ENCODE measurements at regions of chr2 and their contacts with region 1.

Region 1: GRCh38 chr2:186862869-186863709 is 14.1 kb upstream of the ZSWIM2 start:
- DNase-seq: peak; percentile 32
- ATAC-seq: peak; percentile 78
- H3K4me3 ChIP-seq: no peak overlapping the region
- H3K27ac ChIP-seq: no peak overlapping the region
- H3K4me1 ChIP-seq: no peaks in the 10 kb centered on the region
- H3K27me3 ChIP-seq: no peaks in the 10 kb centered on the region
- CTCF ChIP-seq: peak; percentile 54 to 83 (median 61)
- POLR2A ChIP-seq: no peak
- RAD21 ChIP-seq: peak; percentile 87

Region 2: DNA sequence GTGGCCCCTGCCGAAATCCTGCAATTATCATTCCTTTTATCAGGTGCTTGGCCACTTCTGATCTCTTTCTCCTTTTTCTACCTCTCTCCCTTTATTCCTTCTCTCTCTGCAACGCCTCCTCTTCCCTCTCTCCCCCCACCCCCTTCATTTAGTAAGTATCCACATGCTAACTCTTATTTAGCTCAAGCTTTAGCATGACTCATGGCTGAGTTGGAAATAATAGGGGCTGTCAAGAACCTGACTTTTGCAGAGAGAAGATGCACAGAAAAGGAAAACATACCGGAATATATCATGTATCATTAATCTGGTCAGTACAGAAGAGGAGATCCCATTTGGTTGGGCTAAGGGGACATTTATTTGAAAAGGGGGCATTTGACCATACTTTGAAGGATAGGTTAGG is 136.2 kb before region 1 on chr2:
- CTCF ChIA-PET with region 1: no interaction called
- POLR2A ChIA-PET with region 1: no interaction called
- RAD21 ChIA-PET with region 1: no interaction called
- intact Hi-C with region 1: no loop called
- DNase-seq: no peak
- ATAC-seq: no peak
- H3K4me3 ChIP-seq: no peak overlapping the region
- H3K27ac ChIP-seq: no peak overlapping the region
- H3K4me1 ChIP-seq: no peaks in the 10 kb centered on the region
- H3K27me3 ChIP-seq: no peaks in the 10 kb centered on the region
- CTCF ChIP-seq: no peak
- POLR2A ChIP-seq: no peak
- RAD21 ChIP-seq: no peak

Region 3: GRCh38 chr2:186903216-186903615 is 40.1 kb after region 1 on chr2:
- CTCF ChIA-PET with region 1: interaction called, 13 read pairs
- POLR2A ChIA-PET with region 1: no interaction called
- RAD21 ChIA-PET with region 1: no interaction called
- intact Hi-C with region 1: no loop called
- DNase-seq: no peak
- ATAC-seq: no peak
- H3K4me3 ChIP-seq: no peak overlapping the region
- H3K27ac ChIP-seq: no peak overlapping the region
- H3K4me1 ChIP-seq: no peaks in the 10 kb centered on the region
- H3K27me3 ChIP-seq: no peaks in the 10 kb centered on the region
- CTCF ChIP-seq: peak; percentile 28 to 62 (median 33); a peak in 4 of 6 replicates
- POLR2A ChIP-seq: no peak
- RAD21 ChIP-seq: peak; percentile 60

Region 4: GRCh38 chr2:186946896-186947467 is 83.9 kb after region 1 on chr2:
- CTCF ChIA-PET with region 1: no interaction called
- POLR2A ChIA-PET with region 1: no interaction called
- RAD21 ChIA-PET with region 1: no interaction called
- intact Hi-C with region 1: no loop called
- DNase-seq: no peak
- ATAC-seq: no peak
- H3K4me3 ChIP-seq: no peak overlapping the region
- H3K27ac ChIP-seq: no peak overlapping the region
- H3K4me1 ChIP-seq: peaks cover 0 to 5% of the 10 kb centered on the region in 2 experiments; a peak in 1 of 4 replicates
- H3K27me3 ChIP-seq: no peaks in the 10 kb centered on the region
- CTCF ChIP-seq: no peak
- POLR2A ChIP-seq: no peak
- RAD21 ChIP-seq: no peak

Region 5: GRCh38 chr2:187447336-187447735 is 584.2 kb after region 1 on chr2:
- CTCF ChIA-PET with region 1: interaction called, 50 read pairs
- POLR2A ChIA-PET with region 1: no interaction called
- RAD21 ChIA-PET with region 1: interaction called, 3 to 5 read pairs
- intact Hi-C with region 1: no loop called
- DNase-seq: no peak
- ATAC-seq: no peak
- H3K4me3 ChIP-seq: no peak overlapping the region
- H3K27ac ChIP-seq: no peak overlapping the region
- H3K4me1 ChIP-seq: peaks cover 0 to 9% of the 10 kb centered on the region in 2 experiments; a peak in 2 of 4 replicates
- H3K27me3 ChIP-seq: no peaks in the 10 kb centered on the region
- CTCF ChIP-seq: no peak
- POLR2A ChIP-seq: no peak
- RAD21 ChIP-seq: no peak

Region 6: GRCh38 chr2:188512456-188512855 is 1649.4 kb after region 1 on chr2:
- CTCF ChIA-PET with region 1: no interaction called
- POLR2A ChIA-PET with region 1: no interaction called
- RAD21 ChIA-PET with region 1: no interaction called
- intact Hi-C with region 1: loop called (anchors 10 kb)
- DNase-seq: no peak
- ATAC-seq: peak; percentile 60
- H3K4me3 ChIP-seq: no peak overlapping the region
- H3K27ac ChIP-seq: no peak overlapping the region
- H3K4me1 ChIP-seq: peaks cover 0 to 7% of the 10 kb centered on the region in 2 experiments; a peak in 1 of 4 replicates
- H3K27me3 ChIP-seq: no peaks in the 10 kb centered on the region
- CTCF ChIP-seq: peak; percentile 42 to 71 (median 61); a peak in 5 of 6 replicates
- POLR2A ChIP-seq: no peak
- RAD21 ChIP-seq: peak; percentile 89

Measured in HCT116 (cell line).